Naive thymus-derived CD4-positive, alpha-beta T cell (primary cell): ENCODE measurements at regions of chr9 and their contacts with region 1.

Region 1: GRCh38 chr9:129626079-129626624 is at the start of gene NTMT1:
- DNase-seq: peak; percentile 88 to 94 (median 90)
- ATAC-seq: peak; percentile 93
- H3K4me3 ChIP-seq: peak within 1 kb of the TSS; percentile 85
- H3K4me3 Mint-ChIP-seq: peak within 1 kb of the TSS; percentile 85 to 95 (median 88)
- H3K27ac ChIP-seq: peak within 1 kb of the TSS; percentile 89
- H3K27ac Mint-ChIP-seq: peak within 1 kb of the TSS; percentile 88 to 99 (median 94)
- H3K4me1 ChIP-seq: peaks cover 27 to 42% of the 10 kb centered on the region in 2 donors
- H3K4me1 Mint-ChIP-seq: peaks cover 33 to 63% (median 59%) of the 10 kb centered on the region in 7 donors
- H3K27me3 ChIP-seq: no peaks in the 10 kb centered on the region
- H3K27me3 Mint-ChIP-seq: peaks cover 4 to 18% (median 7%) of the 10 kb centered on the region in 5 donors
- total RNA-seq, gene NTMT1: 31.0 to 50.1 (median 34.2) TPM

Region 2: GRCh38 chr9:129036241-129036922 is 589.8 kb before region 1 on chr9 and contains the start of gene MIGA2:
- CTCF ChIA-PET with region 1: no interaction called
- POLR2A ChIA-PET with region 1: no interaction called
- intact Hi-C with region 1: loop called in 1 of 2 experiments (anchors 1 kb)
- DNase-seq: peak; percentile 78 to 93 (median 90)
- ATAC-seq: peak; percentile 99
- H3K4me3 ChIP-seq: peak within 1 kb of the TSS; percentile 87
- H3K4me3 Mint-ChIP-seq: peak within 1 kb of the TSS; percentile 90 to 99 (median 94)
- H3K27ac ChIP-seq: peak within 1 kb of the TSS; percentile 72
- H3K27ac Mint-ChIP-seq: peak within 1 kb of the TSS; percentile 56 to 93 (median 87)
- H3K4me1 ChIP-seq: peaks cover 13 to 17% of the 10 kb centered on the region in 2 donors
- H3K4me1 Mint-ChIP-seq: peaks cover 22 to 41% (median 37%) of the 10 kb centered on the region in 7 donors
- H3K27me3 ChIP-seq: no peaks in the 10 kb centered on the region
- H3K27me3 Mint-ChIP-seq: no peaks in the 10 kb centered on the region
- total RNA-seq, gene MIGA2: 50.0 to 73.4 (median 60.7) TPM

Region 3: DNA sequence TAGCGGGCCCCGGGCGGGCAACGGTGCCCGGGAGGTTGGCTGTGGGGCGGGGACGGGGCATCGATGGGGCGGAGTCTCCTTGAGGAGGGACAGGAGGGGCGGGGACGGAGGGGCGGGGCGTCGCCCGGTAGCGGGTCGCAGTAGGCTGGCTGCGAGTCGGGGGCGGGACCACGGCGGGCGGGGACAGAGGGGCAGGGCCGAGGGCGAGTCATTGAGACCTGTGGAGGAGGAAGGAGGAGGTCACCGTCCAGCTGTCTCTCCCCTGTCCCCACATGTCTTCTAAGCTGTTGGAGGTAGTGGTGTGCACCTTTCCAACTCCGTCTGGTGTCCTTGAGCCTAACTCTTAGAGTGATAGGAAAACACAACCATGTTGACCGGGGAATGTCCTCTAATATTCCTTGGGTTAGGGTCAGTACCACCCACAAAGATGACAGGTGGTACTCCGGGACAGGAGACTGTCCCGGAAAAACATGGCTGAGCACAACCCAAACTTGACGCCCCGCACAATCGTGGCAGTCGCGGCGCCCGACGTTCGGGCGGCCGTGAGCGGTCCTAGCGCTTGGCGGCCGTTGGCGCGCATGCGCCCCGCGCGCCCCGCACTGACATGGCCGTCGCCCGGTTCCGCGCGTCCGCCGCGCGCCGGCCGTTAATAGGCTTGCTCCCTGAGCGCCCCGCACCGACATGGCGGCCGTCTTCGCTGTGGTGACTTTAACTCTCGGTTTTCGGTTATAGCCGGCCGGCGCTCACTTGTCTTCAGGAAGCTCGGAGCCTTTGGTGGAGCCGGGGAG is 515.2 kb before region 1 on chr9 and contains the starts of genes CRAT and PTPA:
- CTCF ChIA-PET with region 1: interaction called, 3 read pairs
- POLR2A ChIA-PET with region 1: interaction called, 4 read pairs
- intact Hi-C with region 1: loop called in 1 of 2 experiments (anchors 1 kb)
- DNase-seq: peak; percentile 85 to 96 (median 89)
- ATAC-seq: peak; percentile 93
- H3K4me3 ChIP-seq: peak within 1 kb of the TSS; percentile 82
- H3K4me3 Mint-ChIP-seq: peak within 1 kb of the TSS; percentile 88 to 97 (median 92)
- H3K27ac ChIP-seq: peak within 1 kb of the TSS; percentile 87
- H3K27ac Mint-ChIP-seq: peak within 1 kb of the TSS; percentile 83 to 97 (median 94)
- H3K4me1 ChIP-seq: peaks cover 10% of the 10 kb centered on the region in 2 donors
- H3K4me1 Mint-ChIP-seq: peaks cover 26 to 45% (median 29%) of the 10 kb centered on the region in 7 donors
- H3K27me3 ChIP-seq: no peaks in the 10 kb centered on the region
- H3K27me3 Mint-ChIP-seq: no peaks in the 10 kb centered on the region
- total RNA-seq, gene CRAT: 7.2 to 15.6 (median 11.4) TPM
- total RNA-seq, gene PTPA: 45.0 to 110 (median 52.3) TPM

Region 4: GRCh38 chr9:129373361-129373760 is 252.8 kb before region 1 on chr9:
- CTCF ChIA-PET with region 1: no interaction called
- POLR2A ChIA-PET with region 1: no interaction called
- intact Hi-C with region 1: no loop called
- DNase-seq: no peak
- ATAC-seq: no peak
- H3K4me3 ChIP-seq: no peak overlapping the region
- H3K4me3 Mint-ChIP-seq: no peak overlapping the region
- H3K27ac ChIP-seq: no peak overlapping the region
- H3K27ac Mint-ChIP-seq: peak overlapping the region in 1 of 9 donors; percentile 14
- H3K4me1 ChIP-seq: no peaks in the 10 kb centered on the region
- H3K4me1 Mint-ChIP-seq: peaks cover 0 to 4% (median 0%) of the 10 kb centered on the region in 7 donors
- H3K27me3 ChIP-seq: no peaks in the 10 kb centered on the region
- H3K27me3 Mint-ChIP-seq: peaks cover 0 to 24% (median 0%) of the 10 kb centered on the region in 5 donors

Region 5: GRCh38 chr9:129610473-129611301 is 15.5 kb before region 1 on chr9:
- CTCF ChIA-PET with region 1: interaction called, 20 read pairs
- POLR2A ChIA-PET with region 1: interaction called, 7 read pairs
- intact Hi-C with region 1: loop called (anchors 1 kb)
- DNase-seq: peak; percentile 53 to 79 (median 71)
- ATAC-seq: peak; percentile 83
- H3K4me3 ChIP-seq: peak overlapping the region; percentile 52
- H3K4me3 Mint-ChIP-seq: peak overlapping the region; percentile 57 to 96 (median 80)
- H3K27ac ChIP-seq: peak overlapping the region; percentile 17
- H3K27ac Mint-ChIP-seq: peak overlapping the region in 5 of 9 donors; percentile 62 to 85 (median 67)
- H3K4me1 ChIP-seq: peaks cover 19 to 21% of the 10 kb centered on the region in 2 donors
- H3K4me1 Mint-ChIP-seq: peaks cover 13 to 44% (median 30%) of the 10 kb centered on the region in 7 donors
- H3K27me3 ChIP-seq: no peaks in the 10 kb centered on the region
- H3K27me3 Mint-ChIP-seq: peaks cover 0 to 4% (median 0%) of the 10 kb centered on the region in 5 donors

Region 6: GRCh38 chr9:129796029-129796910 is 170.1 kb after region 1 on chr9:
- CTCF ChIA-PET with region 1: no interaction called
- POLR2A ChIA-PET with region 1: no interaction called
- intact Hi-C with region 1: loop called (anchors 5 kb)
- DNase-seq: no peak
- ATAC-seq: no peak
- H3K4me3 ChIP-seq: no peak overlapping the region
- H3K4me3 Mint-ChIP-seq: no peak overlapping the region
- H3K27ac ChIP-seq: no peak overlapping the region
- H3K27ac Mint-ChIP-seq: no peak overlapping the region
- H3K4me1 ChIP-seq: no peaks in the 10 kb centered on the region
- H3K4me1 Mint-ChIP-seq: peaks cover 0 to 2% (median 0%) of the 10 kb centered on the region in 7 donors
- H3K27me3 ChIP-seq: no peaks in the 10 kb centered on the region
- H3K27me3 Mint-ChIP-seq: peaks cover 0 to 8% (median 0%) of the 10 kb centered on the region in 5 donors

Region 7: GRCh38 chr9:129863059-129863690 is 237.0 kb after region 1 on chr9:
- CTCF ChIA-PET with region 1: no interaction called
- POLR2A ChIA-PET with region 1: no interaction called
- intact Hi-C with region 1: loop called (anchors 5 to 10 kb)
- DNase-seq: peak in 8 of 9 donors; percentile 45 to 72 (median 53)
- ATAC-seq: peak; percentile 64
- H3K4me3 ChIP-seq: peak overlapping the region; percentile 30
- H3K4me3 Mint-ChIP-seq: peak overlapping the region; percentile 22 to 79 (median 71)
- H3K27ac ChIP-seq: peak overlapping the region; percentile 60
- H3K27ac Mint-ChIP-seq: peak overlapping the region; percentile 84 to 97 (median 93)
- H3K4me1 ChIP-seq: peaks cover 56 to 78% of the 10 kb centered on the region in 2 donors
- H3K4me1 Mint-ChIP-seq: peaks cover 40 to 72% (median 63%) of the 10 kb centered on the region in 7 donors
- H3K27me3 ChIP-seq: no peaks in the 10 kb centered on the region
- H3K27me3 Mint-ChIP-seq: no peaks in the 10 kb centered on the region